BJ (cell line): ENCODE measurements at regions of chrX and their contacts with region 1.

Region 1: GRCh38 chrX:15335135-15336022 is at the start of gene PIGA:
- DNase-seq: peak; percentile 88
- H3K4me3 ChIP-seq: peak within 1 kb of the TSS; percentile 65
- H3K27me3 ChIP-seq: no peaks in the 10 kb centered on the region
- CTCF ChIP-seq: no peak
- polyA plus RNA-seq, gene PIGA: 2.8 and 6.3 TPM in 2 replicates

Region 2: DNA sequence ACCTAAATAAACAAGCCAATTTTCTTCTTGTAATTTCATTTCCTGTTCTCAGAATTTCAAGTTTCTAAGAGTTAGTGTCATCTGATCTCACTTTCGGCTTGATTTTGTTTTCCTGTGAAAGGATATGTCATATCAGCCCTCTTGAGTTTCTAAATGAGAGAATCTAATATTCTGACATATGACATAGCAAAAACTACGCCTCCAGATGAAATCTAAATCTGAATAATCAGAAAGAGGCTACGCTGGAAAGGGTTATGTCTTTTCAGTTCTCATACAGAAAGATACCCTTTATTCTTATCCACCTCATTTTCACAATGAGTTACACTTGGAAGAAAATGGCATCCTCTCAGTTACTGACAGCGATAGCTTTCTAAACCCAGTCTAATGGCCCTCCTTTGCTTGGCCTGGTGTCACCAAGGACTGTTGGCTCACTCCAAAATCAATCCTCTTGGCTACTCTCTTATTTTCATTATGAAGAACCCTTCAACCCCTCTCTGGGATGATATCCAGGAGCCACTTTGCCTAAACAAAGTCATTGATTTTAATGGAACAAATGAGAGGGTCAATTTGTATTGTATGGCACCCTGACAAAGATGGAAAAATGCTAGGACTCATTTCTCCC is 131.1 kb before region 1 on chrX:
- CTCF ChIA-PET with region 1: no interaction called
- POLR2A ChIA-PET with region 1: no interaction called
- DNase-seq: no peak
- H3K4me3 ChIP-seq: no peak overlapping the region
- H3K27me3 ChIP-seq: no peaks in the 10 kb centered on the region
- CTCF ChIP-seq: no peak

Region 3: DNA sequence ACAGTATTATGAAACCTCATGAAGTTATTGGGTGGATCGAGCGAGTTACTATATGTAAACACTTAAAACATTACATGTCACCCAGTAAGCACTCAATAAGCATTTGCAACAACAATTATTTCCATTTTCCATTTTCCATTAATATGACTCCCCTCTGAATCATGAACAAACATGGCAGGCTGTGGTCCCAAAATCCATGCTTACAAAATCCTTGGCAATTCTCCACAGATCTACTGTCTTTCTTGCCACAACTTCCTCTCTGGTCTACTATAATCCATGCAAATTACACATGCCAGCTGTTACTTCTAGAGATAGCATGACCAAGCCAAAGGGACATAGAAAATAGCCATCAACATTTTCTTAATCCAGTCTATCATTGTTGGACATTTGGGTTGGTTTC is 41.9 kb before region 1 on chrX:
- CTCF ChIA-PET with region 1: interaction called, 3 read pairs
- POLR2A ChIA-PET with region 1: interaction called, 19 read pairs
- DNase-seq: no peak
- H3K4me3 ChIP-seq: no peak overlapping the region
- H3K27me3 ChIP-seq: no peaks in the 10 kb centered on the region
- CTCF ChIP-seq: no peak

Region 4: GRCh38 chrX:15546745-15547144 is 211.4 kb after region 1 on chrX:
- CTCF ChIA-PET with region 1: no interaction called
- POLR2A ChIA-PET with region 1: no interaction called
- DNase-seq: no peak
- H3K4me3 ChIP-seq: no peak overlapping the region
- H3K27me3 ChIP-seq: no peaks in the 10 kb centered on the region
- CTCF ChIP-seq: no peak